ENCODE measurements at regions of chr4 and their contacts with region 1.

Region 1: GRCh38 chr4:15649914-15650545 is 5.1 kb downstream of the FBXL5 start:
- DNase-seq: peak; percentile 69
- ATAC-seq: peak; percentile 80
- H3K4me3 Mint-ChIP-seq: peak overlapping the region; percentile 38
- H3K27ac Mint-ChIP-seq: peak overlapping the region; percentile 75
- H3K4me1 Mint-ChIP-seq: peaks cover 59% of the 10 kb centered on the region
- H3K27me3 Mint-ChIP-seq: no peaks in the 10 kb centered on the region

Region 2: GRCh38 chr4:15231265-15232091 is 418.6 kb before region 1 on chr4:
- CTCF ChIA-PET with region 1: interaction called, 5 read pairs
- POLR2A ChIA-PET with region 1: no interaction called
- intact Hi-C with region 1: loop called (anchors 2 kb)
- DNase-seq: peak; percentile 85
- ATAC-seq: peak; percentile 65
- H3K4me3 Mint-ChIP-seq: no peak overlapping the region
- H3K27ac Mint-ChIP-seq: no peak overlapping the region
- H3K4me1 Mint-ChIP-seq: peaks cover 31% of the 10 kb centered on the region
- H3K27me3 Mint-ChIP-seq: no peaks in the 10 kb centered on the region

Region 3: DNA sequence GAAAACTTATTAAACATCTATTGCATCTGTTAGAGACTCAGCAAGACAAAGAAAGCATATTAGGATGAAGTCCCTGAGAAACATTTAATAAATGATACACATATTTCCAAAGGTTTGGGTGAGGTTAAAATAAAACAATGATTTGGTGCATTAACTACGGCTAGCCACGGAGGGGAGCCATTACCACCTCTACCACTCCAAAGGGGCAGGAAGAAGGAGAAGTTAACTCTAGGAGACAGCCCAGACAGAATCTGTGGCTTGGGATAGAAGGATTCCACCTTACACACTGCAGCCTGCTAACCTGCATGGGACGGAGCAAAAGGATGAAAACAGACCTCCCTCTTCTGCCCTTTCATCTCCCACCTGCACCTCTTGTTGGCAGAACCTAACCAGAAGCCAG is 411.3 kb before region 1 on chr4:
- CTCF ChIA-PET with region 1: interaction called, 3 read pairs
- POLR2A ChIA-PET with region 1: no interaction called
- intact Hi-C with region 1: loop called (anchors 1 to 2 kb)
- DNase-seq: peak; percentile 58
- ATAC-seq: peak; percentile 55
- H3K4me3 Mint-ChIP-seq: no peak overlapping the region
- H3K27ac Mint-ChIP-seq: no peak overlapping the region
- H3K4me1 Mint-ChIP-seq: peaks cover 11% of the 10 kb centered on the region
- H3K27me3 Mint-ChIP-seq: no peaks in the 10 kb centered on the region

Region 4: GRCh38 chr4:15479089-15479912 is 170.7 kb before region 1 on chr4:
- CTCF ChIA-PET with region 1: interaction called, 4 read pairs
- POLR2A ChIA-PET with region 1: no interaction called
- intact Hi-C with region 1: loop called (anchors 1 to 5 kb)
- DNase-seq: peak; percentile 15
- ATAC-seq: peak; percentile 39
- H3K4me3 Mint-ChIP-seq: no peak overlapping the region
- H3K27ac Mint-ChIP-seq: no peak overlapping the region
- H3K4me1 Mint-ChIP-seq: no peaks in the 10 kb centered on the region
- H3K27me3 Mint-ChIP-seq: no peaks in the 10 kb centered on the region

Region 5: GRCh38 chr4:15681207-15682015 is 31.4 kb after region 1 on chr4 and contains the start of gene FAM200B:
- CTCF ChIA-PET with region 1: interaction called, 11 read pairs
- POLR2A ChIA-PET with region 1: interaction called, 3 read pairs
- intact Hi-C with region 1: loop called (anchors 1 kb)
- DNase-seq: peak; percentile 99
- ATAC-seq: peak; percentile 98
- H3K4me3 Mint-ChIP-seq: peak within 1 kb of the TSS; percentile 98
- H3K27ac Mint-ChIP-seq: peak within 1 kb of the TSS; percentile 96
- H3K4me1 Mint-ChIP-seq: peaks cover 39% of the 10 kb centered on the region
- H3K27me3 Mint-ChIP-seq: no peaks in the 10 kb centered on the region
- total RNA-seq, gene FAM200B: 9.8 to 13.3 TPM

Measured in activated CD4-positive, alpha-beta T cell treated with anti-CD3 and anti-CD28 coated beads for 36 hours (primary cell).